Panc1 (cell line): ENCODE measurements at regions of chr11 and their contacts with region 1.

Region 1: GRCh38 chr11:108117746-108118371 is 3.5 kb upstream of the ACAT1 start:
- DNase-seq: no peak
- ATAC-seq: no peak
- H3K4me3 ChIP-seq: no peak overlapping the region
- H3K27ac ChIP-seq: no peak overlapping the region
- H3K4me1 ChIP-seq: peaks cover 13% of the 10 kb centered on the region
- H3K27me3 ChIP-seq: no peaks in the 10 kb centered on the region
- CTCF ChIP-seq: peak; percentile 82

Region 2: GRCh38 chr11:107182988-107183387 is 934.9 kb before region 1 on chr11:
- CTCF ChIA-PET with region 1: no interaction called
- POLR2A ChIA-PET with region 1: no interaction called
- in situ Hi-C with region 1: no loop called
- intact Hi-C with region 1: no loop called
- DNase-seq: no peak
- ATAC-seq: no peak
- H3K4me3 ChIP-seq: no peak overlapping the region
- H3K27ac ChIP-seq: no peak overlapping the region
- H3K4me1 ChIP-seq: no peaks in the 10 kb centered on the region
- H3K27me3 ChIP-seq: peaks cover 4% of the 10 kb centered on the region; the same call in 1 of the 2 replicates
- CTCF ChIP-seq: no peak

Region 3: GRCh38 chr11:107951155-107951554 is 166.7 kb before region 1 on chr11:
- CTCF ChIA-PET with region 1: interaction called, 16 read pairs
- POLR2A ChIA-PET with region 1: no interaction called
- in situ Hi-C with region 1: no loop called
- intact Hi-C with region 1: no loop called
- DNase-seq: no peak
- ATAC-seq: no peak
- H3K4me3 ChIP-seq: no peak overlapping the region
- H3K27ac ChIP-seq: no peak overlapping the region
- H3K4me1 ChIP-seq: no peaks in the 10 kb centered on the region
- H3K27me3 ChIP-seq: no peaks in the 10 kb centered on the region
- CTCF ChIP-seq: no peak

Region 4: DNA sequence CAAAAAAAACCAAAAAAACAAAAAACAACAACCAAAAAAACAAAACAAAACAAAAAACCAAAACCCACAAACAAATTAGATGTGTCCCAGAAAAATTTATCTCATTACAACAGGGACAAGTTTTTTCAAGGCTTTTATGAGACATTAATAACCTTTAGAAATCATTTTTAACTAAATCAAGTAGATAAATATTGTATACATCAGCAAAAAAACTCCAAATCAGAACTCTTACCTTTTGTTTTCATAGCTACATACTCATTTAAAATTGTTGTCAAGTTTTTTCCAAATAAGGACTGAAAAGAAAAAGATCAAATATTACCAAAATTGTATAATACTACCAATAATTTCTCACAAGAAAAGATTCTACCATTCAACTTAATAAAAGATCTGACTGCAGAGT is 75.9 kb after region 1 on chr11:
- CTCF ChIA-PET with region 1: interaction called, 12 read pairs
- POLR2A ChIA-PET with region 1: no interaction called
- in situ Hi-C with region 1: no loop called
- intact Hi-C with region 1: no loop called
- DNase-seq: no peak
- ATAC-seq: no peak
- H3K4me3 ChIP-seq: no peak overlapping the region
- H3K27ac ChIP-seq: no peak overlapping the region
- H3K4me1 ChIP-seq: no peaks in the 10 kb centered on the region
- H3K27me3 ChIP-seq: no peaks in the 10 kb centered on the region
- CTCF ChIP-seq: no peak